Panc1 (cell line): ENCODE measurements at regions of chr16 and their contacts with region 1.

Region 1: DNA sequence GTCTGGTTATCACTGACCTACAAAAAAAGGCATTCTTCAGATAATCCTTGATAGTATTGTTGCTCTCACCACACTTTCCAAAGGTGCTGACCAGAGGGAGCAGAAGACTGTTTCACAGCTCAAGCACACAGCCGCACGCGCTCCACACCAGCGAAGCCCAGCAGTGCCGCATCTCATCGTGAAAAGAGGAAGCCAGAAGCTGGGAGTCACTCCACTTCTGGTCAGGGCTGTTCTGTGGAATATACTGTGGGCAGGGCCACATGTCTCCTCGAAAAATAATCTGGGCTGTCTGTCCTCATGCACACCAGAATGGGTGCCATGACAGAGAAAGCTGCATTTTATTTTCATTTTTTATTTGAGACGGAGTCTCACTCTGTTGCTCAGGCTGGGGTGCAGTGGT is 7.3 kb upstream of the PRSS36 start:
- DNase-seq: no peak
- ATAC-seq: 0 out of 2 replicates have a peak, but pooled peaks have one; percentile 27
- H3K4me3 ChIP-seq: no peak overlapping the region
- H3K27ac ChIP-seq: no peak overlapping the region
- H3K4me1 ChIP-seq: no peaks in the 10 kb centered on the region
- H3K27me3 ChIP-seq: no peaks in the 10 kb centered on the region
- CTCF ChIP-seq: no peak

Region 2: GRCh38 chr16:31128711-31129567 is 28.2 kb before region 1 on chr16:
- CTCF ChIA-PET with region 1: no interaction called
- POLR2A ChIA-PET with region 1: no interaction called
- in situ Hi-C with region 1: no loop called
- intact Hi-C with region 1: no loop called
- DNase-seq: no peak
- ATAC-seq: no peak
- H3K4me3 ChIP-seq: no peak overlapping the region
- H3K27ac ChIP-seq: no peak overlapping the region
- H3K4me1 ChIP-seq: no peaks in the 10 kb centered on the region
- H3K27me3 ChIP-seq: no peaks in the 10 kb centered on the region
- CTCF ChIP-seq: no peak

Region 3: DNA sequence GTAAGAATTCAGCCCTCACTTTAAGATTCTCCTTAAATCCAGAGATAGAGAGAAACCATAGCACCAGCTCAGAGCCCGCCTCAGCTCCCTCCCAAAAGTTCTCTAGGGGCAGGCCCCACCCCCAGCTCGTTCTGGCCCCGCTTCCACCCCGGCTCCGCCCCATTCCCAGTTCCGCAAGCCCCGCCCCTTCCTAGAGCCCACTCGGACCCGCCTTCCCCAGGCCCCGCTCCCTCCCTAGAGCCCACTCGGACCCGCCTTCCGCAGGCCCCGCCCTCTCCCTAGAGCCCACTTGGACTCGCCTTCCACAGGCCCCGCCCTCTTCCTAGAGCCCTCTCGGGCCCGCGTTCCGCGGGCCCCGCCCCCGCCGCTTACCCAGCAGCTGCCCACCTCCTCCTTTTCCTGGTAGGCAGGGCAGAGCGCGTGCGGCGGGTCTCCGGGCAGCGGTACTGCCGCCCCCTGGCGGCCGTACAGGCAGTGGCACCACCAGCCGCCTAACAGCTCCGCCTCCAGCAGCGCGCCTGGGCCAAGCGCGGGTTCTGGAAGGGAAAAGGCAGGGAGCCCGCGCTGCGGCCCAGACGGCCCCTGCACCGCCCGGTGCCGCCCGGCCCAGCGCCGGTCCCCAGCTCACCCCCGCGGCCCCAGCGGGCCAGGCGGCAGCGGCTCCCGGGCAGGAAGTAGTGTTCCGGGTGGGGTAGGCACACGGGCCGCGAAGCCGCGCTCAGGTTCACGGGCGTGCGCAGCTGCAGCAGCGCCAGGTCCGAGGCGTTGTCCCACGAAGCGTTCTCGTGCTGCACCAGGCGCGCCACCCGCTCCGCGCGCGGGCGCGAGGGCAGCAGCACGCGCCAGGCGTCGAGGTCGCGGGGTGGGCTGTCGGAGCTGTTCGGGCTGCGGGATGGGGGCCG is 14.8 kb before region 1 on chr16:
- CTCF ChIA-PET with region 1: interaction called, 12 read pairs
- POLR2A ChIA-PET with region 1: interaction called, 3 read pairs
- in situ Hi-C with region 1: no loop called
- intact Hi-C with region 1: no loop called
- DNase-seq: peak; percentile 82
- ATAC-seq: peak; percentile 92
- H3K4me3 ChIP-seq: peak overlapping the region; percentile 43 to 55
- H3K27ac ChIP-seq: peak overlapping the region; percentile 66
- H3K4me1 ChIP-seq: peaks cover 16% of the 10 kb centered on the region
- H3K27me3 ChIP-seq: no peaks in the 10 kb centered on the region
- CTCF ChIP-seq: peak; percentile 99